ENCODE measurements at regions of chr16 and their contacts with region 1.

Region 1: DNA sequence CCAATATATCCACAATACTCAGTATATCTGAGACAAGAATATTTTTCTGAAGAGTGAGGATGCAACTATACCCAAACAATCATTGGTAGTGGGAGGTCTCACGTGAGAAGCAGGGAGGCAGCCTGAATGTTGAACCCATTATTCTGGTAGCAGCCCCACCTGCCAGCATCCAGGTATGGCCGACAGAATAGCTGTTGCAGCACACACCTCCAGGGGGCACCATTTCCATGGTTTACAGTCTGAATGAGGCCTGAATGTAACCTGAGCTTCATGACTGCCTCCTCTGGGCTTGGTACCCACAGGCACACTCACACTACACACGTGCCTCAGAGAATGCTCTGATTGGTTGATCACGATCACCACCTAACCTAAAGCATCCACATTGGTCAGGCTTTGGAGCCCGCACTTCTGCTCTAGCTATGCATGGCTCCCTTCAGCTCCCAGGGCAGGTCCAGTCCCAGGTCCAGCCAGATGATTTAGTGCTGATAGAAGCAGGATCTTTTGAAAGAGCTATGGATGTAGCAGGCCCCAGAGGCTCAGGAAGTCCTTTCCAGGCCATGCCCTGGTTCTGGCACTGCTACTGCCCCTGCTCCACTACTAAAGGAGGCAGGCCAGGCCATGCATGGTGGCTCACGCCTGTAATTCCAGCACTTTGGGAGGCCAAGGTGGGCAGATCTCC is 11.0 kb upstream of the CBFB start:
- DNase-seq: peak; percentile 84 to 91 (median 90)
- ATAC-seq: peak; percentile 92
- H3K4me3 ChIP-seq: no peak overlapping the region
- H3K27ac ChIP-seq: no peak overlapping the region
- H3K4me1 ChIP-seq: peaks cover 10 to 17% of the 10 kb centered on the region in 2 experiments; a peak in 4 of 5 replicates
- H3K27me3 ChIP-seq: no peaks in the 10 kb centered on the region
- CTCF ChIP-seq: peak; percentile 93 to 95 (median 94)
- EP300 ChIP-seq: no peak
- POLR2A ChIP-seq: no peak
- RAD21 ChIP-seq: peak; percentile 91 to 95

Region 2: DNA sequence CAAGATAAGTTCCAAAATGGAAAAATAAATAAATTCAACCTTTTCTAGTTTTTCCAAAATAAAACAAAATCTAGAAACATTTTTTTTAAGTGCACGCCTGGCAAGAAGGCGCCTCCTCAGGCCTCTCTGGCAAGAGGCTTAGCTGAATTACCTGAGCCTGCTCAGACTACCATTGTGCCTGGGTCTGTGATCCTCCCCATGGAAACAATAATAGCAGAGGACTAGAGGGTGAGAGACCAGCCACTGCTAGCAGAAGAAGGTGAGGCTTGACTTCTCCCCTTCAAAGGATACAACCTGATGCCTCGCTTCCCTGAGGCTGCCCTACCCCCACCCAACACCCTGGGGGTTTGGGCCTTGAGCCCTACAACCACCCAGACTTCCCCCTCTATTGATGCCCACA is 231.4 kb before region 1 on chr16:
- CTCF ChIA-PET with region 1: no interaction called
- POLR2A ChIA-PET with region 1: no interaction called
- in situ Hi-C with region 1: no loop called
- intact Hi-C with region 1: no loop called
- DNase-seq: no peak
- ATAC-seq: no peak
- H3K4me3 ChIP-seq: no peak overlapping the region
- H3K27ac ChIP-seq: no peak overlapping the region
- H3K4me1 ChIP-seq: no peaks in the 10 kb centered on the region
- H3K27me3 ChIP-seq: no peaks in the 10 kb centered on the region; a peak in 2 of 5 replicates
- CTCF ChIP-seq: no peak
- EP300 ChIP-seq: no peak
- POLR2A ChIP-seq: no peak
- RAD21 ChIP-seq: no peak

Region 3: DNA sequence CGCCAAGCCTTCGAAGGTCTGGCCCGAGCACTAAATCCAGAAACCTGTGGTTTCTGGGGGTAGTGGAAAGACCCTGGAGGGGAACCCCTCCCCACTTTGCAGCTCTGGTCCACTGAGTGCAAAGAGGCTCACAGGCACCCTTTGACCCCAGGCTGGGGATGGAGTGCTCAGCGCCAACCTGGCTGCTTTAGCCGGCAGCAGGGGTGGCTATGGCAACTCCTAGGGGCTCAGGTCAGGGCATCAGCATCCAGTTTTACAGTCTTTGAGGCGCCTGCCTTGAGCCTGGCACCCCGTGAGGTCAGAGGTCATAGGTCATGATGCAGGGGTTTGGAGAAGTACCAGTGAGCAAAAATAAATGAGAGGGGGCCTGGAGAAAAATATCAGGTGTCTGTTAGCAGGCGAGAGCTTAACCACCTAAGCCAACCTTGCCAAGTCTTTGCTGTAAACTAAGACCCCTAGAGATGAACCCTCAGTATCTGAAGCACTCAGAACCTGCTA is 155.9 kb before region 1 on chr16:
- CTCF ChIA-PET with region 1: no interaction called
- POLR2A ChIA-PET with region 1: no interaction called
- in situ Hi-C with region 1: no loop called
- intact Hi-C with region 1: no loop called
- DNase-seq: no peak
- ATAC-seq: no peak
- H3K4me3 ChIP-seq: no peak overlapping the region
- H3K27ac ChIP-seq: no peak overlapping the region
- H3K4me1 ChIP-seq: no peaks in the 10 kb centered on the region; a peak in 1 of 5 replicates
- H3K27me3 ChIP-seq: no peaks in the 10 kb centered on the region
- CTCF ChIP-seq: no peak
- EP300 ChIP-seq: no peak
- POLR2A ChIP-seq: no peak
- RAD21 ChIP-seq: no peak

Region 4: DNA sequence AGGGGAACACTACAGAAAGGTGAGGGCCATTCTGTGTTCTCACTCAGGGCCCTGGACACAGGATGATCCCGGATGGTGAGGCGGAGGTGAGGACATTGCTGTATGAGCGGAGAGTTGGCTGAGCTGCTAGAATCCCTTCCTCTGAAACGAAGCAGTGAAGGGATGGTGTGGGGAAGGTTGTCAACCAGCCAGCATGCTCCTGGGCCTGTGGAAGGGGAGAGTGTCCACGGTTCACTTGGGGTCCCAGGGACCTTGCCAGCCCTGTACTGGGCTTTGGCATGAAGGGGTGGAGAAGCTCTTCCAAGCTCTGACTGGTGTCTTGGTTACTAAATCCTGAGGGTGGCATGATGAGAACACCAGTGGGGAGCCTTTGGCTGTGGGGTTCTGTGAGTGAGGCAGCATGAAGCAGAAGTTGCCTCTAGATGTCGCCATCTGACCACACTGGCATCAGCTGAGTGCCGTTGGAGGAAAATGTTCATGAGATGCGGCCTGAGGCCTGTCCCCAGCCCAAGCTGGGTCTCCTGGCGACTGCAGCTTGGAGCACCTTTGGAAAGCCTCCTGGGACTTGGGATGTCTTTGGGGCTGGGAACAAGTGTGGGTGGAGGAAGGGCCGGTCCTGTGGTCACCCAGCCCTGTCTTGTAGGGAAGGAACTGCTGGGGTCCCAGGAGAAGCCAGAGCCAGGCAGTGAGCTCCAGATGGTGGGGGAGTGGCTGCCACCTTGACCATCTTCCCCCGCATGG is 122.8 kb before region 1 on chr16:
- CTCF ChIA-PET with region 1: no interaction called
- POLR2A ChIA-PET with region 1: no interaction called
- in situ Hi-C with region 1: no loop called
- intact Hi-C with region 1: loop called (anchors 5 kb)
- DNase-seq: peak; percentile 57 to 88 (median 64)
- ATAC-seq: peak; percentile 87
- H3K4me3 ChIP-seq: no peak overlapping the region
- H3K27ac ChIP-seq: no peak overlapping the region
- H3K4me1 ChIP-seq: peaks cover 14 to 23% of the 10 kb centered on the region in 2 experiments
- H3K27me3 ChIP-seq: no peaks in the 10 kb centered on the region
- CTCF ChIP-seq: peak; percentile 95 to 99 (median 96)
- EP300 ChIP-seq: no peak
- POLR2A ChIP-seq: no peak
- RAD21 ChIP-seq: peak; percentile 96 to 98

Region 5: GRCh38 chr16:66977341-66978113 is 40.4 kb before region 1 on chr16:
- CTCF ChIA-PET with region 1: interaction called, 21 read pairs
- POLR2A ChIA-PET with region 1: no interaction called
- in situ Hi-C with region 1: no loop called
- intact Hi-C with region 1: loop called (anchors 1 kb)
- DNase-seq: peak; percentile 89 to 93 (median 92)
- ATAC-seq: peak; percentile 98
- H3K4me3 ChIP-seq: no peak overlapping the region
- H3K27ac ChIP-seq: no peak overlapping the region
- H3K4me1 ChIP-seq: peaks cover 3 to 26% of the 10 kb centered on the region in 2 experiments; a peak in 4 of 5 replicates
- H3K27me3 ChIP-seq: no peaks in the 10 kb centered on the region
- CTCF ChIP-seq: peak; percentile 94 to 98 (median 97)
- EP300 ChIP-seq: no peak
- POLR2A ChIP-seq: no peak
- RAD21 ChIP-seq: peak; percentile 95 to 98

Region 6: DNA sequence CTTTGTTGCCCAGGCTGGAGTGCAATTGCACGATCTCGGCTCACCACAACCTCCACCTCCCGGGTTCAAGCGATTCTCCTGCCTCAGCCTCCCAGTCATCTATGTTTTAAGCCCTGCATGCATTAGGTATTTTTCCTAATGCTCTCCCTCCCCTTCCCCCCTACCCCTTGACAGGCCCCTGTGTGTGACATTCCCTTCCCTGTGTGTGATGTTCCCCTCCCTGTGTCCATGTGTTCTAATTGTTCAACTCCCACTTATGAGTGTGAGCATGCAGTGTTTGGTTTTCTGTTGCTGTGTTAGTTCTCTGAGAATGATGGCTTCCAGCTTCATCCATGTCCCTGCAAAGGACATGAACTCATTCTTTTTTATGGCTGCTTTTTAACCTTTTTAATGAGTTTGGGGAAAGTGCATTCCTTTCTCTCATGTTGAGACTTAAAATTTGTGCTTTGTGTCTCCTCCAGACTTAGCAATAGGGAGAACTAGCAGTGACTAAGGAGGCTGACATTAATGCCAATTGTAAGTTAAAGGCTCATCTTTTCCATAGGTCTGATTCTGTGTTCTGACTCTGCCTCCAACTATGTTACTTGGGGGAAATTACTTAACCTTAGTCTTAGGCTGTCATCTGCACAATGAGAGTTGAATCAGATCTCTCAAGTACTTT is 74.1 kb after region 1 on chr16:
- CTCF ChIA-PET with region 1: no interaction called
- POLR2A ChIA-PET with region 1: no interaction called
- in situ Hi-C with region 1: loop called (anchors 5 kb)
- intact Hi-C with region 1: no loop called
- DNase-seq: no peak
- ATAC-seq: no peak
- H3K4me3 ChIP-seq: no peak overlapping the region
- H3K27ac ChIP-seq: no peak overlapping the region
- H3K4me1 ChIP-seq: peaks cover 0 to 3% of the 10 kb centered on the region in 2 experiments; a peak in 1 of 5 replicates
- H3K27me3 ChIP-seq: no peaks in the 10 kb centered on the region
- CTCF ChIP-seq: no peak
- EP300 ChIP-seq: no peak
- POLR2A ChIP-seq: no peak
- RAD21 ChIP-seq: no peak

Region 7: GRCh38 chr16:67159593-67160406 is 141.9 kb after region 1 on chr16 and contains the starts of genes FBXL8 and TRADD:
- CTCF ChIA-PET with region 1: interaction called, 29 read pairs
- POLR2A ChIA-PET with region 1: interaction called, 4 read pairs
- in situ Hi-C with region 1: loop called (anchors 5 kb)
- intact Hi-C with region 1: loop called (anchors 1 kb)
- DNase-seq: peak; percentile 83 to 88 (median 88)
- ATAC-seq: peak; percentile 85
- H3K4me3 ChIP-seq: peak within 1 kb of the TSS; percentile 73
- H3K27ac ChIP-seq: peak within 1 kb of the TSS; percentile 78
- H3K4me1 ChIP-seq: peaks cover 25 to 75% of the 10 kb centered on the region in 2 experiments
- H3K27me3 ChIP-seq: no peaks in the 10 kb centered on the region
- CTCF ChIP-seq: peak; percentile 52 to 84 (median 60)
- EP300 ChIP-seq: no peak; the same call in 1 of the 2 replicates
- POLR2A ChIP-seq: peak; percentile 75
- RAD21 ChIP-seq: peak; percentile 23 to 25; a peak in 3 of 4 replicates
- polyA plus RNA-seq, gene FBXL8: 0.08 TPM in 1 of 2 experiments, not detected in the other
- polyA plus RNA-seq, gene TRADD: 0.76 to 1.7 TPM

Region 8: DNA sequence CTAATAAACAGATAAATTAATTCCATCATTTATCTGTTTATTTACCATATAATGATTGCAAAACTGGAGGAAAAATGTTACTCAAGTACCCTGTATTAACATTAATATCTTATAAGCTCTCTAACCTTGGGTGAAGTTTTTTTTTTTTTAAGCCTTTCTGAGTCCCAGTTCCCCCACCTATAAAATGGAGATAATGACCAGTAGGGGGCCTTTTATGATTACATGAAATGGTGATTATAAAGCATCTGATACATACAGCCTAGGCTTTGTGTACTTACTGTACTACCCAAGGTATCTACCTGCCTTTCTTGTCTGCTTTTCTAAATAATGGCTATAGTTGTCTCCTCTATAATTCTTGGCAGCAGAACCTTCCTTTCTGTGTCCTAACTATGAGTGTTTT is 331.2 kb after region 1 on chr16:
- CTCF ChIA-PET with region 1: no interaction called
- POLR2A ChIA-PET with region 1: no interaction called
- in situ Hi-C with region 1: no loop called
- intact Hi-C with region 1: no loop called
- DNase-seq: peak in 3 of 4 experiments; percentile 26 to 38 (median 35)
- ATAC-seq: peak; percentile 68
- H3K4me3 ChIP-seq: no peak overlapping the region
- H3K27ac ChIP-seq: no peak overlapping the region
- H3K4me1 ChIP-seq: no peaks in the 10 kb centered on the region
- H3K27me3 ChIP-seq: peaks cover 6 to 9% of the 10 kb centered on the region in 2 experiments; a peak in 3 of 5 replicates
- CTCF ChIP-seq: peak; percentile 32 to 55 (median 33); a peak in 4 of 6 replicates
- EP300 ChIP-seq: no peak
- POLR2A ChIP-seq: no peak
- RAD21 ChIP-seq: peak in 1 of 2 experiments; percentile 38; a peak in 2 of 4 replicates

Region 9: DNA sequence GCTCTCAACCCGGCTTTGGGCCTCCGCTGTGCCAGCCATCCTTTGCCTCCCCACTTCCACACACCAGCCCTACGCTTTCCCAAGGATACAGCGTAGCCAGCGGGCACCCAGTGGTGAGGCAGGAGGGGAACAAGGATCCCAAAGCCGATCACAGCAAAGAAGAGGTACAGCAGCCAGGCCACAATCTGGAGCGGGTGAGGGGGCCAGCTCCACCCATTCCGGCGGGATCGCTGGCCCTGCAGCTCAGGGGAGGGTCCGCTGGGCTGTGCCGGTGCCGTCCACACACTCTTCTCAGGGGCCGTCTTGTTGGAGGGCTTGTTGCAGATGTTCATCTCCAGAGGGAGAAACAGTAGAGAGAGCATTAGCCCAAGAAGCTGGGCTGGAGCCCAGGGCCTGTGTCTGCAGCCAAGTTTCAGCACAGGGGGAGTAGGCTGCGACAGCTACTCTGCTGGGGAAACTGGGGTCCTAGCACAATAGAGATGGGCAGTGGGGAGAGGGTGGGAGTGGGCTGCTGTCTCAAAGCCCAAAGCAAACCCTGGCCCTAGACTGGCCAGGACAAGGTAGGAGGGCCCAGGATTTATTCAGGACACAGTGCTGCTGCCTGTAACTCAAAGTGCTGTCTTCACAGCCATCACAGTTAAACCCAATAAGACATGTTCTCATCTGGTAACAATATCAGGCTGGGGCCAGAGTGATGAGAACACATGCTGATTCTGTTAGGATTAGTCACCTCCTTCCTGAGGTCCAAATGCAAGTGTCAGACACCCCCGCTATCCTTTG is 388.4 kb after region 1 on chr16:
- CTCF ChIA-PET with region 1: no interaction called
- POLR2A ChIA-PET with region 1: no interaction called
- in situ Hi-C with region 1: no loop called
- intact Hi-C with region 1: loop called (anchors 10 kb)
- DNase-seq: no peak
- ATAC-seq: no peak
- H3K4me3 ChIP-seq: no peak overlapping the region
- H3K27ac ChIP-seq: no peak overlapping the region
- H3K4me1 ChIP-seq: peaks cover 0 to 9% of the 10 kb centered on the region in 2 experiments; a peak in 2 of 5 replicates
- H3K27me3 ChIP-seq: peaks cover 26 to 62% of the 10 kb centered on the region in 2 experiments
- CTCF ChIP-seq: no peak
- EP300 ChIP-seq: no peak
- POLR2A ChIP-seq: no peak
- RAD21 ChIP-seq: no peak